Activated CD4-positive, alpha-beta T cell treated with anti-CD3 and anti-CD28 coated beads for 36 hours (primary cell): ENCODE measurements at regions of chr16 and their contacts with region 1.

Region 1: GRCh38 chr16:19886073-19886941 is 1.7 kb upstream of the GPRC5B start:
- DNase-seq: peak; percentile 90
- ATAC-seq: peak; percentile 79
- H3K4me3 Mint-ChIP-seq: peak overlapping the region; percentile 71
- H3K27ac Mint-ChIP-seq: peak overlapping the region; percentile 47
- H3K4me1 Mint-ChIP-seq: peaks cover 26% of the 10 kb centered on the region
- H3K27me3 Mint-ChIP-seq: peaks cover 18% of the 10 kb centered on the region

Region 2: DNA sequence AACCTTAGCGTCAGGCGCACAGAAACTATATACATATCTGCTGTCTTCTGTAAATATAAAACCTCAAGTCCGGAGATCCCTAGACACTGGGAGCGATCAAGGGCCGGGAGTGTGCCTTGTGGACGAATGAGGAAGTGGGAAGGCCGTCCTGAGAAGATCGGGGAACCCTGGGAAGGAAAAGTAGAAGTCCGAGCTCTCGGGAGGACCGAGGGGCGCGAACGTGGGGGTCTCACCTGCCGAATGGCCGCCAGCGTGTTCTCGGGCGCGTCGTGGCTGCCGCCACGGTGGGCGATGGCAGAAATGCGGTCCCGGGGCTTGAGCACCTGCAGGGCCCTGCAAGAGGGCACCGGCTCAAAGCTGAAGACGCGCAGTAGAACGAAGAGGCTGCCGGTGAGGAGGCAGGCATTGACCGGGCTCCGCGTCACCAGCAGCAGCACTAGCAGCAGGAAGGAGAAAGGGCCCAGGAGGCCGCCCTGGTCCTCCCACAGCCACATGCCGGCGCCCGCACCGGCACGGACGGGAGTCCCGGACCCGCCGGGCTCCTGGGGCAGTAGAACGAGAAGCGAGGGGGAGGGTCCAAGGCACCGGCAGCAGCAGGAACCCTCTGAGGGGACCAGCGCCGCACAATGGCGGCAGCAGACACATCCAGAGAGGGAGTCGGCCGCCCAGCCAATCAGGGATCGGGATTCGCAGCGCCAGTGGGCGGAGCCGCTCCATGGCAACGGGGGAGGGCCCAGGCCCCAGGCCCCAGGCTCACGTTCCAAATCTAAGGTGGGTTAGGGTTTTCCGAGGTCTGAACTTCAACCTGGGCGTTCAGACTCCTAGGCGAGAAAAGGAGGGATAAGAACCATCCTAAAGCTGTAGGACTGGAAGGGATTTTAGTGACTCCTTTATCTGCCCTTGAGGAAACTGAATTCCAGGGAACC is 364.6 kb before region 1 on chr16 and contains the start of gene GDE1:
- CTCF ChIA-PET with region 1: no interaction called
- POLR2A ChIA-PET with region 1: no interaction called
- intact Hi-C with region 1: loop called in 1 of 2 experiments (anchors 10 kb)
- DNase-seq: peak; percentile 97
- ATAC-seq: peak; percentile 83
- H3K4me3 Mint-ChIP-seq: peak within 1 kb of the TSS; percentile 94
- H3K27ac Mint-ChIP-seq: peak within 1 kb of the TSS; percentile 90
- H3K4me1 Mint-ChIP-seq: peaks cover 45% of the 10 kb centered on the region
- H3K27me3 Mint-ChIP-seq: no peaks in the 10 kb centered on the region
- total RNA-seq, gene GDE1: 13.8 to 18.1 TPM

Region 3: GRCh38 chr16:19555162-19555937 is 331.0 kb before region 1 on chr16 and contains the start of gene VPS35L:
- CTCF ChIA-PET with region 1: interaction called, 18 read pairs
- POLR2A ChIA-PET with region 1: no interaction called
- intact Hi-C with region 1: loop called (anchors 1 kb)
- DNase-seq: peak; percentile 96
- ATAC-seq: peak; percentile 97
- H3K4me3 Mint-ChIP-seq: peak within 1 kb of the TSS; percentile 86
- H3K27ac Mint-ChIP-seq: peak within 1 kb of the TSS; percentile 87
- H3K4me1 Mint-ChIP-seq: peaks cover 20% of the 10 kb centered on the region
- H3K27me3 Mint-ChIP-seq: no peaks in the 10 kb centered on the region
- total RNA-seq, gene VPS35L: 30.7 to 31.6 TPM

Region 4: GRCh38 chr16:19563377-19563776 is 322.9 kb before region 1 on chr16:
- CTCF ChIA-PET with region 1: interaction called, 11 read pairs
- POLR2A ChIA-PET with region 1: no interaction called
- intact Hi-C with region 1: loop called (anchors 1 kb)
- DNase-seq: no peak
- ATAC-seq: no peak
- H3K4me3 Mint-ChIP-seq: no peak overlapping the region
- H3K27ac Mint-ChIP-seq: no peak overlapping the region
- H3K4me1 Mint-ChIP-seq: no peaks in the 10 kb centered on the region
- H3K27me3 Mint-ChIP-seq: no peaks in the 10 kb centered on the region

Region 5: DNA sequence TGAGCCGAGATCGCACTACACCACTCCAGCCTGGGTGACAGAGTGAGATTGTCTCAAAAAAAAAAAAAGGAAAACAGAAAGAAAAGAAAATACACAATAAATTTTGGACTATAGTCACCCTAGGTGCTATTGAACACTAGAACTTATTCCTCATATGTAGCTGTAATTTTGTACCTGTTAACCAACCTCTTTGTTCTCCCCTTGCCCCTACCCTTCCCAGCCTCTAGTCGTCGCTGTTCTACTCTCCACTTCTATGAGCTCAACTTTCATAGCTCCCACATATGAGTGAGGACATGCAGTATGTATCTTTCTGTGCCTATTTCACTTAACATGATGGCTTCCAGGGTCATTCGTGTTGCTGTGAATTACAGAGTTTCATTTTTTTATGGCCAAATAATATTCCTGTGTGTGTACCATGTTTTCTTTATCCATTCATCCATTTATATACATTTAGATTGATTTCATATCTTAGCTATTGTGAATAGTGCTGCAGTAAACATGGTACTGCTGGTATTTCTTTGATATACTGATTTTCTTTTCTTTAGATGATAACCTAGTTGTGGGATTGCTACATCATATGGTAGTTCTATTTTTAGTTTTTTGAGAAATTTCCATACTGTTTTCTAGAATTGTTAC is 302.5 kb before region 1 on chr16:
- CTCF ChIA-PET with region 1: interaction called, 13 read pairs
- POLR2A ChIA-PET with region 1: no interaction called
- intact Hi-C with region 1: loop called in 1 of 2 experiments (anchors 1 kb)
- DNase-seq: peak; percentile 39
- ATAC-seq: peak; percentile 82
- H3K4me3 Mint-ChIP-seq: no peak overlapping the region
- H3K27ac Mint-ChIP-seq: no peak overlapping the region
- H3K4me1 Mint-ChIP-seq: peaks cover 17% of the 10 kb centered on the region
- H3K27me3 Mint-ChIP-seq: no peaks in the 10 kb centered on the region

Region 6: DNA sequence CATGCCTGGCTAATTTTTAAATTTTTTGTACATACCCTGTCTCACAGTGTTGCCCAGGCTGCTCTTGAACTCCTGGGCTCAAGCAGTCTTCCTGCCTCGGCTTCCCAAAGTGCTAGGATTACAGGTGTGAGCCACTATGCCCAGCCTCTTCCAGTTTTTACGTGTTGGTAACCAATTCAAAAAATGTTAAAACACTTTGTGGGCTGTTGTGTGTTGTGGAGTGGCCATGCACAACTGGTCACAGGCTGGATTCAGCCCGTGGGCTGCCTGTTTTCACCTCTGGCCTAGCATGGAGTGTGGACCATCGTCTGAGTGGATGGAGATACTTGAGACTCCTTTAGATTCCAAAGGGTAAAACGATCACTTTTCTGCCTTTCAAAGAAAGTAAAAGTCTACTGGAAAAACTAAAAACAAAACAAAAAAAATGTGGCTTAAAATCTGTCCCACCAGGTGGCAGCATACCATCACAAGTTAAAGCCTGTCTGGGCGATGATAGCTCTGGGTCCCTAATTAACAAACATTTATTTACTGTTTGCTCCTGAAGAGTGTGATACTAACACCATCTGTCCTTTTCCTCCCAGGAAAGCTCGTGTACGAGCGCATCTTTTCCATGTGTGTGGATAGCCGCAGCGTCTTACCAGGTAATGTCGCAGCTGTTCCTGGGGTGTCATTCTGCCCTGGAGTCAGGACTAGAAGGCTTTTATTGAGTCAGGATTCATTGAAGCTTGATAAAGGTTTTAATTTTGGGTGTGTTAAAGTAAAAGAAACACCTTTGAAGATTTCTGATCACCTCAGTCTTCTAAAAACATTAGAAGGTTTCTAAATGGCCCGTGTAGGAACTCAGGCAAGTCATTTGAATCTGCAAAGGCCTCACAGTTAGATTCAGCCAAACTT is 285.0 kb before region 1 on chr16:
- CTCF ChIA-PET with region 1: interaction called, 15 read pairs
- POLR2A ChIA-PET with region 1: no interaction called
- intact Hi-C with region 1: loop called (anchors 1 kb)
- DNase-seq: peak; percentile 51
- ATAC-seq: no peak
- H3K4me3 Mint-ChIP-seq: no peak overlapping the region
- H3K27ac Mint-ChIP-seq: no peak overlapping the region
- H3K4me1 Mint-ChIP-seq: no peaks in the 10 kb centered on the region
- H3K27me3 Mint-ChIP-seq: no peaks in the 10 kb centered on the region

Region 7: GRCh38 chr16:19696328-19696727 is 190.0 kb before region 1 on chr16:
- CTCF ChIA-PET with region 1: interaction called, 3 read pairs
- POLR2A ChIA-PET with region 1: no interaction called
- intact Hi-C with region 1: loop called in 1 of 2 experiments (anchors 5 kb)
- DNase-seq: peak; percentile 74
- ATAC-seq: peak; percentile 47
- H3K4me3 Mint-ChIP-seq: peak overlapping the region; percentile 17
- H3K27ac Mint-ChIP-seq: peak overlapping the region; percentile 75
- H3K4me1 Mint-ChIP-seq: peaks cover 65% of the 10 kb centered on the region
- H3K27me3 Mint-ChIP-seq: no peaks in the 10 kb centered on the region